Natural killer cell (primary cell): ENCODE measurements at regions of chr6 and their contacts with region 1.

Region 1: GRCh38 chr6:43575772-43576551 is at the starts of genes POLH and XPO5:
- DNase-seq: peak; percentile 87 to 97
- ATAC-seq: peak; percentile 97 to 99 (median 98)
- H3K4me3 ChIP-seq: peak within 1 kb of the TSS; percentile 99
- H3K4me3 Mint-ChIP-seq: peak within 1 kb of the TSS; percentile 93
- H3K27ac ChIP-seq: peak within 1 kb of the TSS; percentile 77
- H3K27ac Mint-ChIP-seq: peak within 1 kb of the TSS; percentile 89 to 95
- H3K4me1 ChIP-seq: peaks cover 14% of the 10 kb centered on the region
- H3K4me1 Mint-ChIP-seq: peaks cover 30 to 36% of the 10 kb centered on the region in 2 donors
- H3K27me3 ChIP-seq: no peaks in the 10 kb centered on the region
- H3K27me3 Mint-ChIP-seq: no peaks in the 10 kb centered on the region
- CTCF ChIP-seq: no peak
- total RNA-seq, gene POLH: 7.7 to 11.2 (median 7.8) TPM
- total RNA-seq, gene XPO5: 47.6 to 54.6 (median 48.7) TPM

Region 2: GRCh38 chr6:43516697-43517504 is 59.1 kb before region 1 on chr6 and contains the starts of genes POLR1C and YIPF3:
- intact Hi-C with region 1: loop called (anchors 10 kb)
- DNase-seq: peak; percentile 95 to 99
- ATAC-seq: peak; percentile 94 to 95 (median 95)
- H3K4me3 ChIP-seq: peak within 1 kb of the TSS; percentile 86
- H3K4me3 Mint-ChIP-seq: no peak within 1 kb of the TSS
- H3K27ac ChIP-seq: peak within 1 kb of the TSS; percentile 62
- H3K27ac Mint-ChIP-seq: no peak within 1 kb of the TSS
- H3K4me1 ChIP-seq: peaks cover 26% of the 10 kb centered on the region
- H3K4me1 Mint-ChIP-seq: peaks cover 1 to 14% of the 10 kb centered on the region in 2 donors
- H3K27me3 ChIP-seq: no peaks in the 10 kb centered on the region
- H3K27me3 Mint-ChIP-seq: no peaks in the 10 kb centered on the region
- CTCF ChIP-seq: no peak
- total RNA-seq, gene POLR1C: 22.3 to 29.3 (median 25.8) TPM
- total RNA-seq, gene YIPF3: 59.3 to 78.4 (median 70.0) TPM

Region 3: DNA sequence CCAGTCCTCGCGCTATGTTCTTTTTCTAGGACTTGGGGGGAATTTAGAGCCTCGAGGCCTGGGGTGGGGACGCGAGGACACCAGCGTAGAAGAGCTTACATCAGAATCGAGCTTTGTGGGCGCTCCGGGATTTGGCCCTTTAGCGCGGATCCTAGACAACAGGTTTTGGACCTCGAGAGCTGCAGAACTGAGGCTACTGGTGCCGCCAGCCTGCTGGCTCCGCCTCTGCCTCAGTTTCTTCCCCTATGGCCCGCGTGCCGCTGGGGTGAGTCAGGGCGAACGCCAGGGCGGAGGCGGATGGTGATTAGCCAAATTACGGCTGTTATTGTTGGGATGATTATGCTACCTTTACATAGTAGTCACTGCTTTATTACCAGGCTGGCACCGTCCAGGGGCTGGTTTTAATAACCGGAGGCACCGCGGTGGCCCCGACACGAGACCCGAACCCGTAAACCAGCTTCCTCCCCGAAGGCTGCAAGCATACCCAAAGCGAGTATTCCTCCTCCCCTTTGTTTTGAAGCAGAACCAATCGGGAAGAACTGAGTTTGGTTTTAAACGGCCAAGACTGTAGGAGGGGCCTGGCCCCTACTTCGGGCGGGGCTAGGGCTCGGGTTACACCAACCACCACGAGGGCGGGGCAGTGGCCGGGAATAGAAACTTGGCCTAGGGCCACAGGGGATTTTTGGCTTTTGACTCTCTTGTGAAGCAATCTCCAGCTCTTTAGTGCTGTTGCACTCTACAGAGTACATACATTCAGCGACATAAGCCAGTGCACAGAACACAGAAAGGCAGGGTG is 53.7 kb after region 1 on chr6:
- intact Hi-C with region 1: loop called (anchors 2 kb)
- DNase-seq: peak; percentile 77 to 95
- ATAC-seq: peak; percentile 58 to 79 (median 64)
- H3K4me3 ChIP-seq: peak overlapping the region; percentile 76
- H3K4me3 Mint-ChIP-seq: peak overlapping the region; percentile 97
- H3K27ac ChIP-seq: peak overlapping the region; percentile 73
- H3K27ac Mint-ChIP-seq: peak overlapping the region; percentile 92 to 96
- H3K4me1 ChIP-seq: peaks cover 37% of the 10 kb centered on the region
- H3K4me1 Mint-ChIP-seq: peaks cover 23 to 43% of the 10 kb centered on the region in 2 donors
- H3K27me3 ChIP-seq: no peaks in the 10 kb centered on the region
- H3K27me3 Mint-ChIP-seq: no peaks in the 10 kb centered on the region
- CTCF ChIP-seq: no peak